ENCODE measurements at regions of chr10 and their contacts with region 1.

Region 1: DNA sequence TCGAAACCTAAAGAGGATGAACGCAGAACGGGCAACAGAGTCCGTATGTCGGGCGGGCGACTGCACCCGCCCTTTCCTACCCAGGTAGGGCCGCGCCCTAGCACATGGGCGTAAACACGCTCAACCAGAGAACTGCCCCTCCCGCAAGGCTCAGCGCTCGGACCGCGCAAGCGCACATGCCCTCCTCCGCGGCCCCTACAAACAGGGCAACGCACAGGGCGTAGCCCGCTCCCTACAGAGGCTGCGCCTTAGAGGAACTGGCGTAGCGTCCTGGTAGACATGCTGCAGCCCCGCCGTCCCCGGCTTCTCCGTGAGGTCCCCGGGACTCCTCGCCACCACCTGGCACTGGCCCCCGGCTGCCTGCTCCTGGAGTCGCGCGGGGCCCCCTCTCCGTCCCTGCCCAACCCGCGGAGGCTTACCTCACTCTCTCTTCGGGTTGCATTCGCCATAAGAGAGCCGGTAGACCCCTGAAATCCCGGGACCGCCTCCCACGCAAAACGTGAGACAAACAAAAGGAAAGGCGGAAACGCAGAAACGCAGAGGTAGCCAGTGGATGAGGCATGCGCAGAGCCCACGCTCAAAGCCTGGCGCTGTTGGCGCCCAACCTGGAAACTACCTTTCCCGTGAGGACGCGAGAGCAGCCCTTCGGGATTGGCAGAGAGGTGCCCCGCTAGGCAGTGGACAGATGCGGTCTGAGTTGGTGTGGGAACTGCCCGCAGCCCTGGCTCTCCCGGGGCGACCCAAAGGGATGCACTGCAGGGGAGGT is at the start of gene ZNF33B:
- DNase-seq: peak; percentile 95 to 99 (median 96)
- ATAC-seq: peak; percentile 97
- H3K4me3 ChIP-seq: peak within 1 kb of the TSS; percentile 77
- H3K27ac ChIP-seq: peak within 1 kb of the TSS; percentile 92
- H3K4me1 ChIP-seq: peaks cover 9 to 23% of the 10 kb centered on the region in 2 experiments; a peak in 4 of 5 replicates
- H3K27me3 ChIP-seq: no peaks in the 10 kb centered on the region
- CTCF ChIP-seq: no peak
- EP300 ChIP-seq: no peak
- POLR2A ChIP-seq: peak; percentile 98
- RAD21 ChIP-seq: peak in 1 of 2 experiments; percentile 9; a peak in 1 of 4 replicates
- polyA plus RNA-seq, gene ZNF33B: 9.8 to 13.1 TPM

Region 2: DNA sequence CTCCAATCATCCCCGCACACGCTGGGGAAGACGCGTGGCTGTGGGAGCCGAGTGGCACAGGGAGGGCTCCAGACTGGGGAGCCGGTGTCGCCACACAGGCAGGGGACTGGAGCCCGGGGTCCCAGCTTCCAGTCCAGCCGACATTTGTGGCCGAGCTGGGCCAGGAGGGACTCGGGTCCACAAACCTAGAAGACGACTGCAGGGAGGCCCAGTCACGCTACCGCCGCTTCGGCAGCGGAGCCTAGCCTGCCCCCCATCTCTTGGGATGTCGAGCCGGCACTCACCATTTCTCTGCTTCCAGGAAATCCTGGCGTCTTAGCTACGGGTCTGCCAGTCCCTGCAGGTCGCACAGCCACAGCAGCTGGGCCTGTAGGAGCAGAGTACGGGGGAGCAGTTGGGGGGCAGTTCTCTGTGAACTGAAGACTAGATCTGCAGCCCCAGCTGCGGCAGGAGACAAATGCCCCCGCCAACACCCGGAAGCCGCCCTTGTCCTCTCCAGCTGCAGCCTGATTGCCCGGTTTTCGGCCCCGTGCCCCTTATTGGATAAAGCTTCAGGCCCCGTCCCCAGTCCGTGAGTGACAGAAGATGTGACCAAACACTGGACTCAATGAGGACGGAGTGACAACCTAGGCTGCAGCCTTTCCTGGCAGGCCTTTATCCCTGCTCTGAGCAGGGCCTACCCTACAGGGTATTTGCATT is 270.6 kb before region 1 on chr10:
- CTCF ChIA-PET with region 1: no interaction called
- POLR2A ChIA-PET with region 1: no interaction called
- in situ Hi-C with region 1: no loop called
- intact Hi-C with region 1: loop called (anchors 10 kb)
- DNase-seq: peak; percentile 92 to 97 (median 95)
- ATAC-seq: peak; percentile 99
- H3K4me3 ChIP-seq: peak overlapping the region; percentile 64
- H3K27ac ChIP-seq: peak overlapping the region; percentile 79
- H3K4me1 ChIP-seq: peaks cover 0 to 5% of the 10 kb centered on the region in 2 experiments; a peak in 2 of 5 replicates
- H3K27me3 ChIP-seq: no peaks in the 10 kb centered on the region
- CTCF ChIP-seq: no peak
- EP300 ChIP-seq: no peak
- POLR2A ChIP-seq: peak; percentile 89
- RAD21 ChIP-seq: no peak

Region 3: GRCh38 chr10:42782446-42783180 is 144.4 kb after region 1 on chr10 and contains the start of gene BMS1:
- CTCF ChIA-PET with region 1: no interaction called
- POLR2A ChIA-PET with region 1: no interaction called
- in situ Hi-C with region 1: no loop called
- intact Hi-C with region 1: loop called (anchors 5 kb)
- DNase-seq: peak; percentile 88 to 97 (median 90)
- ATAC-seq: peak; percentile 96
- H3K4me3 ChIP-seq: peak within 1 kb of the TSS; percentile 66
- H3K27ac ChIP-seq: peak within 1 kb of the TSS; percentile 91
- H3K4me1 ChIP-seq: peaks cover 0 to 12% of the 10 kb centered on the region in 2 experiments; a peak in 3 of 5 replicates
- H3K27me3 ChIP-seq: peaks cover 0 to 7% of the 10 kb centered on the region in 2 experiments; a peak in 2 of 5 replicates
- CTCF ChIP-seq: no peak
- EP300 ChIP-seq: peak; percentile 72
- POLR2A ChIP-seq: peak; percentile 99
- RAD21 ChIP-seq: peak in 1 of 2 experiments; percentile 33; a peak in 2 of 4 replicates
- polyA plus RNA-seq, gene BMS1: 11.1 to 25.7 TPM